Left ventricle myocardium inferior (tissue), 1 donor: ENCODE measurements at regions of chr6 and their contacts with region 1.

Region 1: DNA sequence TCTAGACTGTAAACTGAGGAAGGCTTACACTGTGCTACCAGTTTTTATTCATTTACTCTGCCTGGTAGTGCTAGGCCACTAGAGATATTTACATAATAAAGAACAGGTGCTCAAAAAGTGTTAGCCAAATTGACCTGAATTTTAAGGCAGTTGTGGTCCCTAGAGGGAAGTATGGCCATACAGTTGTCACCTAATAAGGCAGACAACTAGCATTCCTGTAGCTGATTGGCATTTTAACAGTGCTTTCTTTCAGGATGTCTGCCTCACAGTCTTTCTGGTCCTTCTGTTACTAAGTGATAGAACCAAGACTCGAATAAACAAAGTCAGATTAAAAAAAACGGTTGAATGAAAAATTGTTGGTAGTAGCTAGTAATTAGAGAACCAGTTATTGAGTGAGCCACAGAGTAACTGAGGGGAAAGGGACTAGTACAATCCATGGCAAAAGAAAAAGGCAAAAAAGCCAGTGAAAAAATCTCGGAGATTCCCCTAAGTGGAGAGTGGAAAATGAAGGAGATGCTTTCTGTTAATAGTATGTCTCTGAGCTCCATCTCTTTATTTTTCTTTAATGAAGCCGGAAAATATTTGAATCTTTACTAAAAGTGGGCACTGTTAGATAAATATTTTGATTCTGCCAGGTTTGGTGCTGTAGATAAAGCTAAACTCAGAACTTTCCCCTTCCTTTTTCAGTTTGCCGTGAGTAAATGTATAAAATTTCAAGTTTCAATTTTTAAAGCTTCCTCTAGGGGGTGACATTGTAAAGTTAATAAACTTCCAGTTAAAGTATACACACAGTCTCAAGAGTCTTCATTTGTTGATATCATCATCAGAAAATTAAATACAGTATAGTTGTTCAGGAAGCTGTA is 9.1 kb downstream of the VTA1 start:
- DNase-seq: no peak
- H3K4me3 ChIP-seq: no peak overlapping the region
- H3K27ac ChIP-seq: no peak overlapping the region
- H3K4me1 ChIP-seq: peaks cover 18% of the 10 kb centered on the region
- H3K27me3 ChIP-seq: no peaks in the 10 kb centered on the region
- CTCF ChIP-seq: peak; percentile 57

Region 2: GRCh38 chr6:141532211-141532610 is 623.9 kb before region 1 on chr6:
- intact Hi-C with region 1: no loop called
- DNase-seq: no peak
- H3K4me3 ChIP-seq: no peak overlapping the region
- H3K27ac ChIP-seq: no peak overlapping the region
- H3K4me1 ChIP-seq: no peaks in the 10 kb centered on the region
- H3K27me3 ChIP-seq: no peaks in the 10 kb centered on the region
- CTCF ChIP-seq: no peak

Region 3: DNA sequence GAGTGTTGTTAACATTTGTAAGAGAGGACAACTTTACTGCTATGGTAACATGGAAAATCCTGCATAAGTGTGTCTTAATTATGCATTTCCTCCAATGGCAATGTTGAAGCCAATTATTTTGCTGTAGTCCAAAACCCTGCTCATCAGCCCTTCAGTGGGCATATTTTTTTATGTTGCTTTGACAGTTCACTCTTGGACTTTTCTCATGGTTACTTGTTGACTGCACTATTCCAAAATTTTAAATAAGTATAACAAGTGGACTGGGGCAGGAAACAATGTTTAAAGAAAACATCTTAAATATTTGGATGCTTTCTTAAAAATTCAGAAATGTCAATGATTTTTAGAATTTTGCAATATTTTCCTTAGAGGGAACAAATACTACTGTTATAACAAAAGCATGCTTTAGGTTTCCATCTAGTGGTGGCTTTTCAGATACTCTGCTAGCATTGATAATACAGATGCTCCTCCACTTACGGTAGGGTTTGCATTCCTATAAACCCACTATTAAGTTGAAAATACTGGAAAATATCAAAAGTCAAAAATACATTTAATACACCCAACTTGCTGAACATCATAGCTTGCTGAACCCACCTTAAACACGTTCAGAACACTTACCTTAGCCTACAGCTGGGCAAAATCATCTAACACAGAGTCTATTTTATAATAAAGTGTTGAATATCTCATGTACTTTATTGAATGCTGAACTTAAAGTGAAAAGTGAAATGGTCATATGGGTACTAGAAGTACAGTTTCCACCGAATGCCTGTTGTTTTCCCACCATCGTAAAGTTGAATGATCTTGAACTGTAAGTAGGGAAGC is 232.1 kb after region 1 on chr6:
- intact Hi-C with region 1: loop called (anchors 10 kb)
- DNase-seq: no peak
- H3K4me3 ChIP-seq: no peak overlapping the region
- H3K27ac ChIP-seq: no peak overlapping the region
- H3K4me1 ChIP-seq: no peaks in the 10 kb centered on the region
- H3K27me3 ChIP-seq: no peaks in the 10 kb centered on the region
- CTCF ChIP-seq: peak; percentile 71

Region 4: DNA sequence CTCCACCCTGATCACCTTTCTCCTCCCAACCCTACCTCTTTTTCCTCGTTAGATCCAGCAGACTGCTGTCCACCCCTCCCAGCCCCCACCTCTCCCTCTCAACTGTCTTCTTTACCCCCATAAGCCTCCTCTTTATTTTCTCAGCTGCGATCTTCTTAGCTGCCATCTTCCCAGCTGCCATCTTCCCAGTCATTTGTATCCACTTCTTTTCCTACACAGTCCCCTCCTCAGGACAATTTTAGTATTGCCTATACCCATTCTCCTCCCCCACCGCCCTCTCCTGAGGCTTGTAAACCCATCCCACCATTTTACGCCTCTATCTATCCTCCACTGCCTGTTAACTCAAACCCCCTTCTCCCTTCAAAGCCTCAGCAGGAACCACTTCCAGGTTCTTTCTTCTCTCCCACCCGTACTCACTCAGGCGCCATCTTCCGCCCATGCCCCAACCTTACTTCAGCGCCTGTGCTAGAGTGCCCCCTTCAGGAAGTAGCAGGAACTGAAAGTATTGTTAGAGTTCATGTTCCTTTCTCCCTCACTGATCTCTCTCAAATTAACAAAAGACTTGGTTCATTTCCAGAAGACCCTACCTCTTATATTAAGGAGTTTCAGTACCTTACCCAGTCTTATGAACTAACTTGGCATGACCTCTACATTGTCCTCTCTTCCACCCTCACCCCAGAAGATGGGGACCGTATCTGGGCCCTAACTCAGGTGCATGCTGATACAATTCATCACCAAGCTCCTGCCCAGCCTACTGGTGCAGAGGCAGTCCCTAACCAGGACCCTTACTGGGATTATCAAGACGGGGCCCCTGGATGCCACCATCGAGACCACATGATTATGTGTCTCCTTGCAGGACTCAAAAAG is 381.7 kb after region 1 on chr6:
- intact Hi-C with region 1: no loop called
- DNase-seq: no peak
- H3K4me3 ChIP-seq: no peak overlapping the region
- H3K27ac ChIP-seq: no peak overlapping the region
- H3K4me1 ChIP-seq: no peaks in the 10 kb centered on the region
- H3K27me3 ChIP-seq: peaks cover 16% of the 10 kb centered on the region
- CTCF ChIP-seq: peak; percentile 30